CD4-positive, alpha-beta T cell (primary cell): ENCODE measurements at regions of chr5 and their contacts with region 1.

Region 1: DNA sequence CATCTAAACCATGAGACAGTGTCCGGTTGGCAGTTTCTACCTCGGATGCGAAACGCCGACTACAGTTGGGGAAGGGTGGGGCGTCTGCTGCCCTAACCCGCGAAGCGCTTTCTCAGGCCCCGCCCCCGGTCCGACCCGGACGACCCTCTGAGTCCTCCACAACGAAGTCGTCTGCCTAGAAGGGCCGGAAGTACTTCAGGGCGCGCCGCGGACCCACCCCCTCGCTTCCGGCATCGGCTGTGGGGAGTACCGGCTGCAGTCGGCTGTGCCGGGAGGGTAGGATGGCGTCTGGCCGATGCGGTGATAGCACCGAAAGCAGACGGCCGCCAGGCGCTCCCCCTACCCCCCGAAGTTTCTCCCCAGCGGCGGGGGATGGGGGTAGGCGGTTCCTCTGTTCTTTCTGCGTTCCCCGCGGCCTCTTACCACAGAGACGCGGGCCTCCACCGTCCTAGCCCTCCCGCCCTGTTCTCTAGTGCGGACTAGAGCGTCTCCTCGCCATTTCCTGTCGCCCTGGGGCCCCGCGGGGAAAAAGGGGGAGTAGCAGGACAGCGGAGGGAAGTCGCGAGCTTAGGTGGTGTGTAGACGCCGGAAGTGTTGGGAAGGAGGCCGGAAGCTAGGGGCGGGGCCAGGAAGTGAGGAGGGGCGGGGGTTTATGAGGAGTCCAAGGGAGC is at the start of gene TRIM41:
- DNase-seq: peak; percentile 94 to 98 (median 97)
- ATAC-seq: peak; percentile 61
- H3K4me3 ChIP-seq: peak within 1 kb of the TSS; percentile 80
- H3K4me3 Mint-ChIP-seq: peak within 1 kb of the TSS; percentile 96
- H3K27ac ChIP-seq: peak within 1 kb of the TSS; percentile 97 to 99
- H3K27ac Mint-ChIP-seq: peak within 1 kb of the TSS; percentile 99
- H3K4me1 ChIP-seq: peaks cover 64% of the 10 kb centered on the region
- H3K4me1 Mint-ChIP-seq: peaks cover 51% of the 10 kb centered on the region
- H3K27me3 ChIP-seq: no peaks in the 10 kb centered on the region
- H3K27me3 Mint-ChIP-seq: peaks cover 23% of the 10 kb centered on the region
- CTCF ChIP-seq: no peak
- total RNA-seq, gene TRIM41: 21.4 to 24.0 TPM

Region 2: GRCh38 chr5:181088289-181088688 is 134.9 kb before region 1 on chr5:
- CTCF ChIA-PET with region 1: no interaction called
- POLR2A ChIA-PET with region 1: no interaction called
- intact Hi-C with region 1: no loop called
- DNase-seq: peak in 1 of 14 experiments; percentile 16
- ATAC-seq: no peak
- H3K4me3 ChIP-seq: no peak overlapping the region
- H3K4me3 Mint-ChIP-seq: no peak overlapping the region
- H3K27ac ChIP-seq: no peak overlapping the region
- H3K27ac Mint-ChIP-seq: no peak overlapping the region
- H3K4me1 ChIP-seq: no peaks in the 10 kb centered on the region
- H3K4me1 Mint-ChIP-seq: no peaks in the 10 kb centered on the region
- H3K27me3 ChIP-seq: peaks cover 24 to 42% of the 10 kb centered on the region in 2 experiments
- H3K27me3 Mint-ChIP-seq: peaks cover 66% of the 10 kb centered on the region
- CTCF ChIP-seq: no peak

Region 3: DNA sequence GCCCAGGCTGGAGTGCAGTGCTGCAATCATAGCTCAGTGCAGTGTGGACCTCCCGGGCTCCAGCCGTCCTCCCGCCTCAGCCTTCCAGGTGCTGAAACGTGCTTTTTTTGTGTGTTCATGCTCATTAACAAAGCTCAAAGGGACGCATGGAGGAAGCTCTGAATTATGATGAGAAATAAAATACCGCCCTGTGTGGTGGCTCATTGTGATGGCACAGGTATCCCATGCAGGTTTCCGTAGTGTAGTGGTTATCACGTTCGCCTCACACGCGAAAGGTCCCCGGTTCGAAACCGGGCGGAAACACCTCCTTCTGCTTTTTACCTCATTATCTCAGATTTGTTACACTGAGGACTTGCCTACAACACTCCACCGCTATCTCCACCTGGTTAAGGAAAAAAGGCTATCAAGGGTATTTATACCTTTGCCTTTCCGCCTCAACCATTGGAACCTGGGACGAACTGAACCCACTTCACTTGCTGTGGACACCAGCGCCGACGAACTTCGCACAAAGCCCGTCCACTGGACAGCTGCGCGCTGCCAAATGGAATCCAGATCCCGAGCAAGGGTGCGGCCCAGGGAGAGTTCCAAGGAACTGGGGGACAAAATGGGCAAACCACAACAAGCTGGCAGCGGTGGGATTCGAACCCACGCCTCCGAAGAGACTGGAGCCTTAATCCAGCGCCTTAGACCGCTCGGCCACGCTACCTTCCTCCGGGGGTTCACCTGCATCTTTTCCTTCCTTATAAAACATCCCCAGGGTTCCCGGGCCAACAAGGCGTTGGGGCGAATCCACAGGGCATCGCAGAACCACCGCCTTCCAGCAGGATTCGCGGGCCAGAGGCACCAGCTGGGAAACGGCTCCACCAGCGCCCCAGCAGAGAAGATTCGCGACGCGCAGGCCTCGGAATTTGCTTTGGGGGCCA is 49.5 kb before region 1 on chr5:
- CTCF ChIA-PET with region 1: no interaction called
- POLR2A ChIA-PET with region 1: interaction called, 12 read pairs
- intact Hi-C with region 1: loop called in 1 of 2 experiments (anchors 10 kb)
- DNase-seq: peak in 9 of 14 experiments; percentile 17 to 76 (median 55)
- ATAC-seq: peak; percentile 84
- H3K4me3 ChIP-seq: peak overlapping the region; percentile 25
- H3K4me3 Mint-ChIP-seq: peak overlapping the region; percentile 92
- H3K27ac ChIP-seq: no peak overlapping the region
- H3K27ac Mint-ChIP-seq: peak overlapping the region; percentile 78
- H3K4me1 ChIP-seq: peaks cover 33% of the 10 kb centered on the region
- H3K4me1 Mint-ChIP-seq: peaks cover 44% of the 10 kb centered on the region
- H3K27me3 ChIP-seq: peaks cover 21 to 45% of the 10 kb centered on the region in 2 experiments
- H3K27me3 Mint-ChIP-seq: peaks cover 44% of the 10 kb centered on the region
- CTCF ChIP-seq: peak; percentile 10

Region 4: GRCh38 chr5:181181650-181182565 is 41.3 kb before region 1 on chr5:
- CTCF ChIA-PET with region 1: interaction called, 14 read pairs
- POLR2A ChIA-PET with region 1: interaction called, 187 read pairs
- intact Hi-C with region 1: no loop called
- DNase-seq: peak; percentile 46 to 88 (median 58)
- ATAC-seq: peak; percentile 59
- H3K4me3 ChIP-seq: no peak overlapping the region
- H3K4me3 Mint-ChIP-seq: peak overlapping the region; percentile 86
- H3K27ac ChIP-seq: no peak overlapping the region
- H3K27ac Mint-ChIP-seq: peak overlapping the region; percentile 86
- H3K4me1 ChIP-seq: peaks cover 30% of the 10 kb centered on the region
- H3K4me1 Mint-ChIP-seq: peaks cover 40% of the 10 kb centered on the region
- H3K27me3 ChIP-seq: no peaks in the 10 kb centered on the region
- H3K27me3 Mint-ChIP-seq: no peaks in the 10 kb centered on the region
- CTCF ChIP-seq: peak; percentile 87

Region 5: DNA sequence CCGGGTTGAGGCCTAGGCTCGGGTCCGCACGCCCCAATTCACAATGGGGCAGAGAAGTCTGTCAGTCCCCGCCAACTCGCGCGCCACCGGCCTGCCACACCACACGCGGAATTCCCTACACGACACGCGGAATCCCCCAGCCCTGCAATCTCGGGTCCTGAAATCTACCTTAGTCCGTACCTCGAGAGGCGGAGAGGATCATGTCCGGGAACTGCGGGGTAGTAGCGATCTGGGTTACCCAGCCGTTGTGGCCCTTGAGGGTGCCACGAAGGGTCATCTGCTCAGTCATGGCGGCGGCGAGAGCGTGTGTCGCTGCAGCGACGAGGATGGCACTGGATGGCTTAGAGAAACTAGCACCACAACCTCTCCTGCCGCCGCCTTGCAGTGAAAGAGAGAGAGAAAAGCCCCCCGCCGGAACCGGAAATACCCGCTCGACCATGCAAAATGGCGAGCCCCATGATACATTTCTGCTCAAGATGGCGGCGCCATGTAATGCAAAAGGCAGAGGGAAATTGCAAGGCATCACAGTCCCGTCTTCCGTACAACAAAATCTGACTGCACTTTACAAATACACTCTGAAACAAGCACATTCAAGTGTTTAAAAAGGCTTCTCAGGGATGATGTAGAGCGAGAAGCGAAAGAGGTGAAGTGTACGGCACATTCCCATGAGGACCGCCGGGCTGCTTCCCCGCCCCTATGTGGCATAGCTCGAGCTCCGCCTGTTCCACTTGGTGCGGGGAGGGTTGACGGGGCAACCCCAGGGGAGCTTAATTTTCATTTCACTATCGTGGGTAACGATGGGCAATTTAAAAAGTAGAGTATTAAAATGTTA is 20.5 kb after region 1 on chr5 and contains the start of gene RACK1:
- CTCF ChIA-PET with region 1: interaction called, 3 read pairs
- POLR2A ChIA-PET with region 1: interaction called, 152 read pairs
- intact Hi-C with region 1: loop called (anchors 1 kb)
- DNase-seq: peak; percentile 84 to 95 (median 88)
- ATAC-seq: peak; percentile 75
- H3K4me3 ChIP-seq: peak within 1 kb of the TSS; percentile 94
- H3K4me3 Mint-ChIP-seq: peak within 1 kb of the TSS; percentile 95
- H3K27ac ChIP-seq: peak within 1 kb of the TSS; percentile 81 to 90
- H3K27ac Mint-ChIP-seq: peak within 1 kb of the TSS; percentile 96
- H3K4me1 ChIP-seq: peaks cover 87% of the 10 kb centered on the region
- H3K4me1 Mint-ChIP-seq: peaks cover 76% of the 10 kb centered on the region
- H3K27me3 ChIP-seq: no peaks in the 10 kb centered on the region
- H3K27me3 Mint-ChIP-seq: no peaks in the 10 kb centered on the region
- CTCF ChIP-seq: no peak
- total RNA-seq, gene RACK1: 2,499 to 2,682 TPM

Region 6: GRCh38 chr5:181271081-181271480 is 47.9 kb after region 1 on chr5:
- CTCF ChIA-PET with region 1: no interaction called
- POLR2A ChIA-PET with region 1: no interaction called
- intact Hi-C with region 1: no loop called
- DNase-seq: no peak
- ATAC-seq: no peak
- H3K4me3 ChIP-seq: no peak overlapping the region
- H3K4me3 Mint-ChIP-seq: no peak overlapping the region
- H3K27ac ChIP-seq: no peak overlapping the region
- H3K27ac Mint-ChIP-seq: no peak overlapping the region
- H3K4me1 ChIP-seq: no peaks in the 10 kb centered on the region
- H3K4me1 Mint-ChIP-seq: no peaks in the 10 kb centered on the region
- H3K27me3 ChIP-seq: no peaks in the 10 kb centered on the region
- H3K27me3 Mint-ChIP-seq: no peaks in the 10 kb centered on the region
- CTCF ChIP-seq: no peak